PC-3 (cell line): ENCODE measurements at regions of chr1 and their contacts with region 1.

Region 1: DNA sequence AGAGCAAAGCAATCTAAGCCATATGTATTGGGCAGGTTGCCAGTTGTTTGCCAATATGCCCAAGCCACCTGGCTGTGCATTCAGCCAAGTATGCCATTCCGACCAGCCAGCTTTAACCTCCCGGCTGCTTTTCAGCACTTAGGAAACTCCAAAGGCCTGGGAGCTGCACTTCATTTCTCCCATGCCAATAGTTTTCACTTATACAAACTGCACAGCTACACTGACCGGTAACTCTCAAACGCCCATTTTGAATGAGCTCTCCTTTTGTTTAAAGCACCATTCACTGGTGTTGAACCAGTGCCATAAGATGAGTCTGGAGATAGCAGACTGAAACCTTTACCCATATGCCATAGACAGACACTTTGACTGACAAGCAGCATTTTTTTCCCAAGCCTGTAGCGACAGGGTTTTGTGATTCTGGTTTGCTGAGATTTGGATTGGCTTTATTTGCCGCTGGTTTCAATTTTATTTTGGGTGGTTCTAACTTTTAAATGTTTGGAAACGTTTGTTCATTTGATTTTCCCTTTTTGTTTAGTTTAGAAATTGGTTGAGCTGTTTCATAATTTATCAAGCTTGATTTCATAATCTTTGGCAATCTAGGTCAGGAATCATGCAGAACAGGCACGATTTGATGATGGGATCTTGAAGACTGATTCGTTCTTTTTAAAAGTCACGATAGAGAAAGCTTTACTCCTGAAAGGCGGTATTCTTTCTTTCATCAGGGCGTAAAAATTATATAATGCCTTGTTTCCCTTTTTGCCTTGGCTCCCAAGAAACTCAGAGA is 144.6 kb downstream of the NFIA start:
- DNase-seq: no peak
- ATAC-seq: no peak
- H3K4me3 ChIP-seq: no peak overlapping the region
- H3K27ac ChIP-seq: no peak overlapping the region
- H3K4me1 ChIP-seq: no peaks in the 10 kb centered on the region
- H3K27me3 ChIP-seq: no peaks in the 10 kb centered on the region
- CTCF ChIP-seq: no peak

Region 2: DNA sequence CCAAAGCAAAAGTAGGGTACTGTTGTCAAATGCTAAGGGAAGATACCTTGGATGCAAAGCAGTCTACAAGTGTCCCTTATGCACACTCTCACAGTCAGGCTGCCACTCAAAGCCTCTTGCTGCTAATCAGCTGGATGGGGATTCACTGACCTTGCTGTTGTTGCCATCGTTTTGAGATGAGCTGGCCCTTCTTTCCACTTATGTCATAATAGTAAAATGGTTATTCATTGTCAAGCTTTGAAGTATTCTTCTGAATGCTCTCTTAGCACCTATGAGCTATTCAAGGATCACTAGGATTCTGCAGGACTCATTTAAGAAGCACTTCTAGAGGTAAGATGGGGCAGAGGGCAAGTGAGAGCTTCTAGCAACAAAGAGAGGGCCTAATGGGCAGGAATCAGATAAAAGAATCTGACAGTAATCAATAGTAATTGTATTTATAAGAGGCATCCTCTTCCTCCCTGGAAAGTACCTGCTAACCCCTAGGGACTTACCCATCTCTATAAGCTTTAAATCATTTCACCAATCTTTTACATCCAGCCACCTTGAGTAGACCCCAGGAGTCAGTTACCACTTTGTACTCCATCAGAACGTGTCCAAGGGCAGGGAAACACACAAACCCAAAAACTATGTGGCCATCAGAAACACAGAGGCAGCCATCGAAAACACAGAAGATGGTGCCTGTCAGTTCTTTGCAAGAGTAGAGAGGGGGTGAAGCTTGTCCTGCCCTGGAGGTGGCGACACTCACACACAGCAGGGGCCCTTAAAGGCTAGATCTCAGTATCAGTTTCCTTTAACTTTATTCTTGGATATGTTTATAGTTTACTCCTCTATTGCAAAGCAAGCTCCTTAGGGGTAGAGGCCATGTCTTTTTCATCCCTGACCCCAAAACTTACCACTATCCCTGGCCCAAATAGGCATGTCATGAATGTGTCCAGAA is 248.3 kb before region 1 on chr1:
- CTCF ChIA-PET with region 1: interaction called, 6 read pairs
- POLR2A ChIA-PET with region 1: no interaction called
- intact Hi-C with region 1: loop called (anchors 10 kb)
- DNase-seq: peak; percentile 64
- ATAC-seq: peak; percentile 94
- H3K4me3 ChIP-seq: no peak overlapping the region
- H3K27ac ChIP-seq: no peak overlapping the region
- H3K4me1 ChIP-seq: no peaks in the 10 kb centered on the region
- H3K27me3 ChIP-seq: no peaks in the 10 kb centered on the region
- CTCF ChIP-seq: peak; percentile 93

Region 3: GRCh38 chr1:61056573-61057439 is 170.2 kb before region 1 on chr1:
- CTCF ChIA-PET with region 1: no interaction called
- POLR2A ChIA-PET with region 1: interaction called, 10 read pairs
- intact Hi-C with region 1: no loop called
- DNase-seq: peak; percentile 65
- ATAC-seq: peak; percentile 83
- H3K4me3 ChIP-seq: peak overlapping the region; percentile 93
- H3K27ac ChIP-seq: peak overlapping the region; percentile 20; the same call in 1 of the 2 replicates
- H3K4me1 ChIP-seq: peaks cover 13% of the 10 kb centered on the region
- H3K27me3 ChIP-seq: no peaks in the 10 kb centered on the region
- CTCF ChIP-seq: no peak

Region 4: GRCh38 chr1:61287734-61288133 is 60.8 kb after region 1 on chr1:
- CTCF ChIA-PET with region 1: no interaction called
- POLR2A ChIA-PET with region 1: no interaction called
- intact Hi-C with region 1: no loop called
- DNase-seq: peak; percentile 95
- ATAC-seq: peak; percentile 84
- H3K4me3 ChIP-seq: no peak overlapping the region
- H3K27ac ChIP-seq: peak overlapping the region; percentile 90
- H3K4me1 ChIP-seq: peaks cover 37% of the 10 kb centered on the region
- H3K27me3 ChIP-seq: no peaks in the 10 kb centered on the region
- CTCF ChIP-seq: no peak

Region 5: GRCh38 chr1:62391369-62391971 is 1164.5 kb after region 1 on chr1:
- CTCF ChIA-PET with region 1: no interaction called
- POLR2A ChIA-PET with region 1: no interaction called
- intact Hi-C with region 1: no loop called
- DNase-seq: peak; percentile 38
- ATAC-seq: no peak
- H3K4me3 ChIP-seq: no peak overlapping the region
- H3K27ac ChIP-seq: no peak overlapping the region
- H3K4me1 ChIP-seq: no peaks in the 10 kb centered on the region
- H3K27me3 ChIP-seq: no peaks in the 10 kb centered on the region
- CTCF ChIP-seq: peak; percentile 74